CD8-positive, alpha-beta T cell (primary cell): ENCODE measurements at regions of chrX and their contacts with region 1.

Region 1: DNA sequence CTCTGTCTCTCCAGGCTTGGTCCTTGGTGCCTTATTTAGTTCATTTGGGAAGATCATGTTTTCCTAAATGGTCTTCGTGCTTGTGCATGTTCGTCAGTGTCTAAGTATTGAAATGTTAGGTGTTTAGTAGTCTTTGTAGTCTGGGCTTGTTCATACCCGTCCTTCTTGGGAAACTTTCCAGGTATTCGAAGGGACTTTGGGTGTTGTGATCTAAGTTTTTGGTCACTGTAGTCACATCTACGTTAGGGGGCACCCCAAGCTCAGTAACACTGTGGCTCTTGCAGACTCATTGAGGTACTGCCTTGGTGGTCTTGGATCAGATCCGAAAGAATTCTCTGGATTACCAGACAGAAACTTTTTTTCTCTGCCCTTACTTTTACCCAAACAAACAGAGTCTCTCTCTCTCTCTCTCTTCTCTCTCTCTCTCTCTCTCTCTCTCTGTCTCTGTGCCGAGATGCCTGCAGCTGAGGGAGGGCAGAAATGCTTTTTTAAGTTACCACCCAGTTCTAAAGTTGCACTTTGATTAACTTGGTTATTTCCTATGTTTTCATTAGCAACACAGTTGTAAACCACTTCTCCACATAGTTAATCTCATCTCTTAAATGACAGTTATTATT is 67.6 kb upstream of the SLC7A3 start:
- DNase-seq: peak in 6 of 9 experiments; percentile 0 to 52 (median 22)
- ATAC-seq: no peak
- H3K4me3 ChIP-seq: no peak overlapping the region
- H3K4me3 Mint-ChIP-seq: no peak overlapping the region
- H3K27ac ChIP-seq: no peak overlapping the region
- H3K27ac Mint-ChIP-seq: no peak overlapping the region
- H3K4me1 ChIP-seq: no peaks in the 10 kb centered on the region
- H3K4me1 Mint-ChIP-seq: peaks cover 6% of the 10 kb centered on the region
- H3K27me3 ChIP-seq: no peaks in the 10 kb centered on the region
- H3K27me3 Mint-ChIP-seq: no peaks in the 10 kb centered on the region
- CTCF ChIP-seq: no peak

Region 2: DNA sequence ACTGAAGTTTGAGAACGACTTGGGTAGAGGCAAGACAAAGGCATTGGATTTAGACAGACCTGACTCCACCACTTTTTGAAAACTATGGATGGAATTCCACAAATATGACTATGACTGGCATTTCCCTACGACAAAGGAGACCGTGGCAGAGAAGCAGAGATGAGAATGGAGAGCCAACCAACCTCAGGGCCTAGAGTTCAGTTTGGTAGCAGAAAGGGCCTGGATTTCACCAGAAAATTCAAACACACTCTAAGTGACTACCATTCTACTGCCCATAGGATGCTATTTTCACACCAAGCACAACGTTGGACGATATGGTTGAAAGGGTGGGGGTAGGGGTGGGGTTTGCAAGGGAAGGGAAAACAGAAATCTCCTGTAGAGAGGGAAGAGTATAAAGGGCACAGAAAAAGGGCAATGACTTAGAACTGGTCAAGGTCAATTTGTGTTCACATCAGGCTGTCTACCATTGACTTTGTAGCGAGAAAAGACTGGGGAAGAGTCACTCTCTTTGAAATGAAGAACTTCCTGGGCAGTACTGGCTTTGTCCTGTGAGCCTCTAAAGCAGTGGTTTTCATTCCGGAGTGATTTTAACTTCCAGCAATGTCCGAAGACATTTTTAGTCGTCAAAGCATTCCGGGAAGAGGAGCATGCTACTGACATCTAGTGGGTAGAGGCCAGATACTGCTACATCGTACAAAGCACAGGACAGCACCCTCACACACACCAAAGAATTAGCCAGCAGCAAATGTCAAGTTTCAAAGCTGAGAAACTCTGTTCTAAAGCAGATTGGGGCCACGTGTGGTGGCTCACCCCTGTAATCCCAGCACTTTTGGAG is 19.4 kb before region 1 on chrX:
- CTCF ChIA-PET with region 1: no interaction called
- POLR2A ChIA-PET with region 1: no interaction called
- intact Hi-C with region 1: no loop called
- DNase-seq: peak in 2 of 9 experiments; percentile 1 to 12
- ATAC-seq: no peak
- H3K4me3 ChIP-seq: no peak overlapping the region
- H3K4me3 Mint-ChIP-seq: no peak overlapping the region
- H3K27ac ChIP-seq: no peak overlapping the region
- H3K27ac Mint-ChIP-seq: no peak overlapping the region
- H3K4me1 ChIP-seq: no peaks in the 10 kb centered on the region
- H3K4me1 Mint-ChIP-seq: peaks cover 3% of the 10 kb centered on the region
- H3K27me3 ChIP-seq: no peaks in the 10 kb centered on the region
- H3K27me3 Mint-ChIP-seq: peaks cover 2% of the 10 kb centered on the region
- CTCF ChIP-seq: no peak

Region 3: DNA sequence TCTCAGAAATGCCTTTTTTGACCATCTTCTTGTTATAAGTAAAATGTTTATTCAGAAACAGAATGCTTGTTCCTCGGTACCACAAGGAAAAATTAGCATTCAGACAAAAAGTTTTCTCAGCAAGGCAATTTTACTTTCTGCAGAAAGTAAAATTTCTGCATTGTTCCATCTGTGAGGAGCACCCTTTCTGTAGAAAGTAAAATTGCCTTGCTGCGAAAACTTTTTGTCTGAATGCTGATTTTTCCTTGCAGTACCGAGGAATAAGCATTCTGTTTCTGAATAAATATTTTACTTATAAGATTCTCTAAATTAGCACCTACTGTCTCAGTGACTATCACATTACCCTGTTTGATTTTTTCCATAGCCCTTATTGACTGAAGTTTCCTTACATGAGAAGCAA is 327.9 kb after region 1 on chrX:
- CTCF ChIA-PET with region 1: no interaction called
- POLR2A ChIA-PET with region 1: no interaction called
- intact Hi-C with region 1: loop called in 1 of 2 experiments (anchors 10 kb)
- DNase-seq: no peak
- ATAC-seq: no peak
- H3K4me3 ChIP-seq: no peak overlapping the region
- H3K4me3 Mint-ChIP-seq: no peak overlapping the region
- H3K27ac ChIP-seq: no peak overlapping the region
- H3K27ac Mint-ChIP-seq: no peak overlapping the region
- H3K4me1 ChIP-seq: no peaks in the 10 kb centered on the region
- H3K4me1 Mint-ChIP-seq: no peaks in the 10 kb centered on the region
- H3K27me3 ChIP-seq: no peaks in the 10 kb centered on the region
- H3K27me3 Mint-ChIP-seq: no peaks in the 10 kb centered on the region
- CTCF ChIP-seq: no peak